Breast epithelium (tissue), 4 donors: ENCODE measurements at regions of chr5 and their contacts with region 1.

Region 1: DNA sequence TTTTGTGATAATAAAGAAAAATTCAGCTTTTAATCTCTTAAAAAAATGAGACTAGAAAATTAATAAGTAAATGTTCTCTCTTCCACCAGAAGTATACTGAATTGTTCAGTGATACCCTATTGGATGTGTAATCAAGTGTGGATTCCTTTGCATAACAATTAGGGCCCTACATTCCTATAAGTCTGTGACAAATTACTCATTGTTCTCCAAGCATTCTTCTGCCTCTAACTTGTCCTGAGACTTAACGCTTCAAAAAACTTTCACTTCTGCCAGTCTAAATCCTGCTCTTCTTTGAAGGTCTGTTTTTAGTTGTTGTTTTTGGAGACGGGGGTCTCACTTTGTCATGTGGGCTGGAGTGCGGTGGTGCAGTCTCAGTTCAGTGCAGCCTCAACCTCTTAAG is 9.2 kb upstream of the DDX46 start:
- DNase-seq: no peak
- H3K4me3 ChIP-seq: no peak overlapping the region
- H3K27ac ChIP-seq: no peak overlapping the region
- H3K4me1 ChIP-seq: no peaks in the 10 kb centered on the region
- H3K27me3 ChIP-seq: no peaks in the 10 kb centered on the region
- CTCF ChIP-seq: no peak
- POLR2A ChIP-seq: no peak

Region 2: DNA sequence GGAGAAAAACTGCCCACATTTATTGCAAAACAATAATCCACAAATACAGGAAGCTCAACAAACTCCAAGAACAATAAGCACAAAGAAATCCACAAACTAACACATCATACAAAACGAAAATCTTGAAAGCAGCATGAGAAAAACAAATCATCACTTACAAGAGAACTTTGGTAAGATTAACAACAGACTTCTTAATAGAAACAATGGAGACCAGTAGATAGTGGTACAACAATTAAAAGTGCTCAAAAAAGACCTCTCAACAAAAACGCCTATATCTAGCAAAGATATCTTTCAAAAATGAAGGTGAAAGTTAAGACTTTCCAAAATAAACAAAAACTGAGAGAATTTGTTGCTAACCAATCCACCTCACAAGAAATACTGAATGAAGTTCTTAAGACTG is 420.8 kb before region 1 on chr5:
- intact Hi-C with region 1: loop called (anchors 5 kb)
- DNase-seq: no peak
- H3K4me3 ChIP-seq: no peak overlapping the region
- H3K27ac ChIP-seq: no peak overlapping the region
- H3K4me1 ChIP-seq: no peaks in the 10 kb centered on the region
- H3K27me3 ChIP-seq: no peaks in the 10 kb centered on the region
- CTCF ChIP-seq: no peak
- POLR2A ChIP-seq: no peak

Region 3: GRCh38 chr5:134380346-134380745 is 369.1 kb before region 1 on chr5:
- intact Hi-C with region 1: no loop called
- DNase-seq: no peak
- H3K4me3 ChIP-seq: no peak overlapping the region
- H3K27ac ChIP-seq: no peak overlapping the region
- H3K4me1 ChIP-seq: no peaks in the 10 kb centered on the region
- H3K27me3 ChIP-seq: no peaks in the 10 kb centered on the region
- CTCF ChIP-seq: no peak
- POLR2A ChIP-seq: no peak

Region 4: GRCh38 chr5:134724872-134725271 is 24.5 kb before region 1 on chr5:
- intact Hi-C with region 1: no loop called
- DNase-seq: no peak
- H3K4me3 ChIP-seq: no peak overlapping the region
- H3K27ac ChIP-seq: no peak overlapping the region
- H3K4me1 ChIP-seq: no peaks in the 10 kb centered on the region
- H3K27me3 ChIP-seq: no peaks in the 10 kb centered on the region
- CTCF ChIP-seq: no peak
- POLR2A ChIP-seq: no peak